Left colon (tissue), 2 donors: ENCODE measurements at regions of chr11 and their contacts with region 1.

Region 1: GRCh38 chr11:33257897-33258630 is 883 bp downstream of the HIPK3 start:
- DNase-seq: peak; percentile 80
- ATAC-seq: peak; percentile 65

Region 2: GRCh38 chr11:33089776-33090175 is 168.3 kb before region 1 on chr11:
- intact Hi-C with region 1: no loop called
- DNase-seq: no peak
- ATAC-seq: no peak

Region 3: DNA sequence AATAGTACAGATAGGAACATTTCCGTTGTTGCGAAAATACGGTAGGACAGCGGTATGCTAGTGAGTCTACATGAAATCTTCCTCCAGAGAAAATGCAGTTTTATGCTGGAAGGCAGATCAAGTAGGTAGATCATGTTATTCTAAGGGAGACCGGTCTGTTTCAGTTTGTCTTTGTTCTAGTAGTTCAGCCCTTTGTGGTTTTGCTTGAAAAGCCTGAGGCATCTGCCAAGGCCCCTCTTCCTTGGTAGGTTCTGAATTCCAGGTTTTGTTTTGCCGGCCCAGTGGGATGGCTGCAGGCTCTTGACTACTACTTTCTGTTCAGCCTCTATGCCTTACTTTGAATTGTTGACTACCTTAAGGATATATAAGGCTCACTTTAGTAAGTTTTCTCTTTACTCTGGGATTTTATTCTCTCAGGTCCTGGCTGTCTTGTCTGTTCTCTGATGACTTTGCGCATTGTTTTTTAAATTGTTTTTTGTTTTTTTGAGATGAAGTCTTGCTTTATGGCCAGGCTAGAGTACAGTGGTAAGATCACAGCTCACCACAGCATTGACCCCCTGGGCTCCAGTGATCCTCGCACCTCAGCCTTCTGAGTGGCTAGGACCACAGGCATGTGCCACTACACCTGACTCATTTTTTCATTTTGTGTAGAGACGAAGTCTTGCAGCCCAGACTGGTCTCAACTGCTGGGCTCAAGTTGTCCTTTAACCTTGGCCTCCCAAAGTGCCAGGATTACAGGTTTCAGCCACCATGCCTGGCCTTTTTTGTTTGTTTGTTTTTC is 52.8 kb after region 1 on chr11:
- intact Hi-C with region 1: no loop called
- DNase-seq: no peak
- ATAC-seq: no peak

Region 4: DNA sequence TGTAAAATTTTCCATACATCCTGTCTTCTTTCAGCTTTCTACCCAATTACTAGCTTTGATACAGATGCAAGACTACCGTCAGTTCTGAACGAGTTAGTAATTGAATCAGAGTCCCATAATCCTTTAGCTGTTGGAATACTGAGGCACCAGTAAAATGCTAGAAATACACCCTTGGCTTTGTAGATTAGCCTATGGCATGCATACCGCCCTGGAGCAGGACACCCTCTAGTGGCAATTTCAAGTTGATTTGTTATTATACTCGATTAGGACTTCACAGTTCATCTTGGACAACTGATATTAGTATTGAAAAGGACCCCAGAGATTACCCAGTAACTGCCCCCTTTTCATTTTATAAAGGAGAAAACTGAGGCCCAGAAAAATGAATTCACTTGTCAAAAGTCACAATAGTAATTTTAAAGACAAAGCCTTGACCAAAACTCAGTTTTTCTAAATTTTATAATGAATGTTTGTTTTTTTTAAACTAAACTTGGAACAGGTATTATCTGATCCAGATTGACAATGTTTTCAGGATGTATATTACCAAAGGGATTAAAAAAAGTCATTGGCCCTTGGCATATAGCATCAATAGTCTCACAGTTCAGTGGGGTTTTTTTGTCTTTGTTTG is 71.8 kb after region 1 on chr11:
- intact Hi-C with region 1: loop called in 1 of 2 experiments (anchors 5 kb)
- DNase-seq: peak in 1 of 2 donors; percentile 39
- ATAC-seq: peak; percentile 96